Activated CD4-positive, alpha-beta memory T cell treated with anti-CD3 and anti-CD28 coated beads, Interleukin-2, amount 10 ng/mL, durations not matched to agents 7 days and 5 days (primary cell): ENCODE measurements at regions of chr16 and their contacts with region 1.

Region 1: DNA sequence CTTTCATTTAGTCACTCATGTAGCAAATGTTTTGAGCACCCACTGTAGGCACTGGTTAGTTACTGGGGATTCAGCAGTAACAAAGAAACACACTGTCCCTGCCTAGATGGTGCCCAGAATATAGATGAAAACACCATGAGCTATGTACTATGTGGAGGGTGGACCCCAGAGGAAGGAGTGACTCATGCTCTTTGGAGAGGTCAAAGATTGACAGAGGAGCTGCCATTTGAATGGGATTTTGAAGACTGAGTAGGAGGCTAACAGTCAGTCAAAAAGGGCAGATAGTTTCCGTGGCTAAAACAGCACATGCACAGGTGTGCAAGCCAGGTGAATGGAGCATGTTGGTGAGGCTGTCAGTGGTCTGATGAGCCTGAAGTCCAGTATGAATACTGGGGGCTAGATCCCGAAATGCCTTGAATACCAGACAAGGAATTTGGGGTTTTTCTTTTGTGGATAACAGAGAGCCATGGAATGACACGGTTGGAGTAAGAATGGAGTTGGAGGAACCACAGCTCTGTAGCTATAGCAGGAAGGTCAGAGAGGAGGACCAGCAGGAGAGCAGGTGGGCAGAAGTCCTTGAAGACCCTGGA is 6.1 kb downstream of the IL21R start:
- DNase-seq: no peak
- H3K4me3 Mint-ChIP-seq: peak overlapping the region; percentile 50
- H3K27ac Mint-ChIP-seq: peak overlapping the region; percentile 87
- H3K4me1 Mint-ChIP-seq: peaks cover 83% of the 10 kb centered on the region
- H3K27me3 Mint-ChIP-seq: no peaks in the 10 kb centered on the region

Region 2: DNA sequence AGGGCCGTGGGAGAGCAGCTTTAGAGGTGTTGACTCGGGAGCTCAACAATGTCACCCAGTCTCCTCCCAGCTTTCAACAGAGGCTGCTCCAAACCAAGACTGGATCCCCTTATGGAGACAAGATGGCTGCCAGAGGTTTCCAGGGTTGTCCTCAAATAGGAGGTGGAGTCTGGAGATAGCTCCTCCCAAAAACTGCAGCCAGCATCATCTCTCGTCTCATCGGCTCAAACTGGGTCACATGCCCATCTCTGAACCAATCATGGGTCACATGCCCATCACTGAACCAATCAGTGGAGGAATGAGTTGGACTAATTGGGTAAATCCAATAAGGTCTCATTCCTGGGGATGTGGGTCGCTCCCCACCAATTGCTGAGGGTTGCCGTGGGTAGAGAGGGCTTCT is 382.5 kb before region 1 on chr16:
- CTCF ChIA-PET with region 1: no interaction called
- POLR2A ChIA-PET with region 1: no interaction called
- DNase-seq: no peak
- H3K4me3 Mint-ChIP-seq: no peak overlapping the region
- H3K27ac Mint-ChIP-seq: no peak overlapping the region
- H3K4me1 Mint-ChIP-seq: no peaks in the 10 kb centered on the region
- H3K27me3 Mint-ChIP-seq: no peaks in the 10 kb centered on the region

Region 3: DNA sequence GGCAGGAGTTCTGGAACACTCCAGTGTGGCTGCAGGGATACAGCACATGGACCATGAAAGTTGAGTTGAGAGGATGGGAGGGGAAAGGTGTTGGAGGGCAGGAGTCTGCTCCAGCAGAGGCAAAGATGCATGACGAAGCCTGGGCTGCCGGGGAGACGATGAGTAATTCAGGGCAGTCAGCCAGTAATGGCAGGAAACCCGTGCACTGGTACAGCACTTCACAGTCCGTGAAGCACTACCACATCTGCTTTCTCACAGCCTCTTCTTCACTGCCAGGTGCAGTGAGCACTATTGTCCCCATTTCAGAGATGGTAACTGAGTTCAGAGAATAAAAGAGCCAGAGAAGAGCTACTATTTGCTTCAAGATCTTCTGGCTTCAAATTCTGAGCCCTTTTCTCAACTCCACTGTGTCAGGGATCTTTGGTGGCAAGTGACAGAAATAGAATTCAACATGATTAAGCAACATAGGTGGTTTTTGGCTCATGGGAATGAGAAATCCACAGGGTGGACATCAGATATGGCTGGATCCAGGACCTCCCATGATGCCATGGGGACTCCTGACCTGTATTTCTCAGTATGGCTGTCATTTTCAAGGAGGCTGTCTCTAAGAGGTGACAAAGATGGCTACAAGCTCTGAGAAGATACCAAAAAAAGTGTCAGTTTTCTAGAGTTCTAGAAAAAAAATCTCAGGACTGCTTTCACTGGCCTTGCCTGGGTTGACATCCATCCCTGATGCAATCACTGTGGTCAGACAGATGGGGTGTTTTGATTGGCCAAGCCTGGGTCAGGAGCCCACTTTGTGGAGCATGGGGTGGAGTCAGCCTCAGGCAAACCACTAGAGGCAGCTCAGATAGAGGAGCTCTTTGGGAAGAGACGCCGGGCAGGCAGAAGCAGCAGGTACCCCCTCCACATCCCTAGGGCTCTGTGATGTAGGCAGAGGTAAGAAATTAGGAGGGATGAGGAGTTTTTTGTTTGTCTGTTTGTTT is 18.6 kb after region 1 on chr16:
- CTCF ChIA-PET with region 1: interaction called, 9 read pairs
- POLR2A ChIA-PET with region 1: interaction called, 14 read pairs
- DNase-seq: peak; percentile 84
- H3K4me3 Mint-ChIP-seq: peak overlapping the region; percentile 57
- H3K27ac Mint-ChIP-seq: peak overlapping the region; percentile 78
- H3K4me1 Mint-ChIP-seq: peaks cover 59% of the 10 kb centered on the region
- H3K27me3 Mint-ChIP-seq: no peaks in the 10 kb centered on the region